ENCODE measurements at regions of chr21 and their contacts with region 1.

Region 1: DNA sequence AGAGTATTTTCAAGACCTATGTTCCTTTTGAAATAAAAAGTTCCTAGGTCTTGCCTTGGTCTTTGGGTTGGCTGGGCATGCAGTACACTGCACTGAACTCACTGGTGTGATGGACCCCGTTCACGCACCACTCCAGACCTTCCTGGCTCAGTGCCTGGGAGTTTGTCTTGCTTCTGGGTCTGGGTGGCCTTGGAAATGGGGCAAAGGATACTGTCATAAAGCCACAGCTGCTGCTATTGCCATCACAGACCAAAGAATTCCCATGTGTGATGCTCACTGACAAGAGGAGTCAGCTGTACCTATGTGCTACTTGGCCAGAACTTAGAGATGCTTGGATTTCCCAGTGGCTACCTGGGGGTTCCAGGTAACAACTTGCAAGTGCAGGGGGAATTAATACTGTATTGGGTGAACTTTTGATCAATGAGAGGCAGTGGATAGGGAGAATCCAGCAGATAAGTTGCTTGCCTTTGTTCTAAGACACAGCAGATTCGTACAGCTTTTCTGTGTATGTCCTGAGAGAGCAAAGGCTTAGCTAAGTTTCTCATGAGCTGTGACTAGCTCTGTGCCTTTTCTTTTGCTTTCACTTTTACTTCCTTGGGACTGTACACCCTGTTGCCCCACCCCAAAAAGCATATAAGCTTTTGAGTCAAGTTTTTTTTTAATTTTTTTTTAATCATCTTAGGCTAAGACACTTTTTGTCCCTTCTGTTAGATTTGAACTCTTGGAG is 115.3 kb downstream of the RUNX1 start:
- DNase-seq: peak; percentile 43
- H3K4me3 Mint-ChIP-seq: peak overlapping the region; percentile 77
- H3K27ac Mint-ChIP-seq: peak overlapping the region; percentile 97
- H3K4me1 Mint-ChIP-seq: peaks cover 83% of the 10 kb centered on the region
- H3K27me3 Mint-ChIP-seq: no peaks in the 10 kb centered on the region

Region 2: DNA sequence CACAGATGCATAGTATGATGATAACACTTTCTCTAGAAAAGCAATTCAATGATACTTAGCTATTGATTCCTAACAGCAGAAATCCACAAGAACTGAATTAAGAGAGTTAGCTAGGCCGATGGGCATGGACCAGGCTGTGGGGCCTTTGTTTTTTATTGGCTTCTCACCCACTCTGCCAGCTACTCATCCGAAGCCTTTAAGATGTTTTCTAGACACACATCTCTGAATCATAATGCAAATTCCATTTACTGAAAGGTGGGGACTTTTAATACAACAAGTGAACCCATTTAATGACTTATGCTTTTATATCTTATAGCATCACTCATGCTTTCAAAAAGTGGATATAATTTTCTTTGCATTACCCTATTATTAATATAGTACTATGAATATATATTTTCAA is 54.8 kb before region 1 on chr21:
- CTCF ChIA-PET with region 1: no interaction called
- POLR2A ChIA-PET with region 1: no interaction called
- intact Hi-C with region 1: no loop called
- DNase-seq: no peak
- H3K4me3 Mint-ChIP-seq: no peak overlapping the region
- H3K27ac Mint-ChIP-seq: no peak overlapping the region
- H3K4me1 Mint-ChIP-seq: peaks cover 73% of the 10 kb centered on the region
- H3K27me3 Mint-ChIP-seq: no peaks in the 10 kb centered on the region

Region 3: GRCh38 chr21:34974162-34974981 is 40.6 kb after region 1 on chr21:
- CTCF ChIA-PET with region 1: interaction called, 6 read pairs
- POLR2A ChIA-PET with region 1: interaction called, 12 read pairs
- intact Hi-C with region 1: no loop called
- DNase-seq: peak; percentile 72
- H3K4me3 Mint-ChIP-seq: peak overlapping the region; percentile 70
- H3K27ac Mint-ChIP-seq: peak overlapping the region; percentile 81
- H3K4me1 Mint-ChIP-seq: peaks cover 80% of the 10 kb centered on the region
- H3K27me3 Mint-ChIP-seq: no peaks in the 10 kb centered on the region